Right ventricle myocardium inferior (tissue), 1 donor: ENCODE measurements at regions of chr17 and their contacts with region 1.

Region 1: DNA sequence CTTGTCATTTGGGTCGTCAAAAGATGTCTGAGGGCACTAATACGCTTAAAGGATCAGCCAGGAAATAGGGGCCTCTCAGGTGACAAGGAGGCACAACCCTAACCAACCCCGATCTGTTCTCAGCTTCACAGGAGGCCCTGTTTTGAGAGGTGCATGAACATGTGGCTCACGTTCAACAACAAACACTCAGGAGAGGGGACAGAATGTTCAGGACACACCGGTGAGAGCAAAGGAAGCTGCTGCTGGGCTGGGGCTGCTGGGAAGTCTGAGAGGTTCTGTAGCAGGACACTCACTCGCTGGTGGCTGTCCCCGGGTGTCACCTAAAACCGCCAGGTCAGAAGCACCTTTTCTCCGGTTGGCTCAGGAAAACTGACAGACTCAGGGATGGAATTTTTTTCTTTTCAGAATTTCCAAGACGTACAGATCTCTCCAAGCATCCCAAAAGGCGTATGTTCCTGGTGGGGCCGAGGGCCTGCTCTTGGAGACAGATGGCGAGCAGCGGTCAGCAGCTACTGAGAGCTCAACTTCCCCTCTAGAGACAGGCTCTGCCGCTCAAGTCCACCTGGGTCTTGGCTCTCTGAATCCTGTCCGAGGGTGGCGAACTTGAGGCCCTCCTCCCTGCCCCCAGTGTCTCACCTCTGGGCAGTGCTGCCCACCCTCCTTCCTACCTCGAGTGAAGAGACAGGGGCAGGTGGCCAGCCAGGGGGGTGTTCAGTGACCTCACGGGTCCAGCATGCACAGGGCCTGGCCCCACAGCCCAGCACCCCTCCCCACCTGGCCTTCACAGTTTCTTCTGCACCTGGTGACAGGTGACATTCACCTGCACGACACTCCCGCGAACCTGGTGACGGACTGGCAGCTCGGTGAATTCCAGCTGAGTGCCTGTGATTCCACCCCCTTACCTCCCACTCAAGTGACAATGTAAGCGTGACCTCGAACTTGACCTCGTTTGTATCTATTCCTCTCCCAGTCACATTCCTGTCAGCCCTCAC is 22.9 kb downstream of the CLUH start:
- DNase-seq: no peak
- ATAC-seq: peak; percentile 29

Region 2: GRCh38 chr17:2484876-2485275 is 203.8 kb before region 1 on chr17:
- intact Hi-C with region 1: loop called (anchors 10 kb)
- DNase-seq: no peak
- ATAC-seq: no peak

Region 3: DNA sequence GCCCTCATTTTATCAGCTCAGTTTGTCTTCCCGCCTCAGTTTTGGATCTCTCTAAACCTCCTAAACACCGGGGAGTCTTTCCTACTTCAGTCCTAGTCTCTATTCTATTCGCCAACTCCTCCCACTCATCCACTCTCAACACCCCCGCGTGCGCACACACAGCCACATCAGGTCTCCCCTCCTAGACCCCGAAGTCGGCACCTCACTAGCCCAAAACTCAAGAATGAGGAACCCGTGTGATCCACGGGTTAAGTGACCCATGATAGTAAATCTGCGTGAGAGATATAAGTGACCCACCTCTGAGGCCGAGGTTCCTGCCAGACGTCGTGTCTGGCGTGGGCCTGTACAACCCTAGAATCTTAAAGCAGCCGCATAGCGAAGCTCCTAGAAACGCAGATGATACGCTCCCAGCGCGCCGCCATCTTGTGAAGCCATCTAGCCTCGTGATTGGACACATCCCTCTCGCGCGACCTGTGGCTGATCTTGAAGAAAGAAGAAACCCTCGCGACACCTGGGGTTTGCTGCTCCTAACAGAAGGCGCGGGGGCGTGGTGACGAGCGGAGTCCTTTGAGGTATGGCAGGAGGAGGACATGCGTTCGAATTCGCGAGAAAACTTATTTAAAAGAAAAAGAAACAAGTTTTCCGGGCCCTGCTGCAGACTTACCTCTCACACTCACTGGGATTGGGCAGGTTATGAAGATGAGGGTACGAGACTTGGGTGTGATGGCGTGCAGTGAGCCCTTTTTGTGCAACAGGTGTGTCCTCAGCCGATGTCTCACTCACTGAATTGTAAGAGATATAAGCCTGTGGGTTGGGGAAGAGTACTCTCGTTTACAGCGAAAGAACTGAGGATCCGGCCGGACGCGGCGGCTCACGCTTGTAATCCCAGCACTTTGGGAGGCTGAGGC is 176.9 kb before region 1 on chr17 and contains the start of gene METTL16:
- intact Hi-C with region 1: loop called (anchors 10 kb)
- DNase-seq: peak; percentile 99
- ATAC-seq: peak; percentile 100
- total RNA-seq, gene METTL16: 20.1 TPM

Region 4: GRCh38 chr17:2637422-2637821 is 51.2 kb before region 1 on chr17:
- intact Hi-C with region 1: no loop called
- DNase-seq: no peak
- ATAC-seq: no peak

Region 5: GRCh38 chr17:2711601-2712299 is 23.1 kb after region 1 on chr17 and contains the start of gene CLUH:
- intact Hi-C with region 1: loop called (anchors 2 kb)
- DNase-seq: peak; percentile 99
- ATAC-seq: peak; percentile 89
- total RNA-seq, gene CLUH: 180 TPM